ENCODE measurements at regions of chr1 and their contacts with region 1.

Region 1: GRCh38 chr1:23777979-23778814 is at the start of gene PITHD1:
- DNase-seq: peak; percentile 54 to 95 (median 72)

Region 2: DNA sequence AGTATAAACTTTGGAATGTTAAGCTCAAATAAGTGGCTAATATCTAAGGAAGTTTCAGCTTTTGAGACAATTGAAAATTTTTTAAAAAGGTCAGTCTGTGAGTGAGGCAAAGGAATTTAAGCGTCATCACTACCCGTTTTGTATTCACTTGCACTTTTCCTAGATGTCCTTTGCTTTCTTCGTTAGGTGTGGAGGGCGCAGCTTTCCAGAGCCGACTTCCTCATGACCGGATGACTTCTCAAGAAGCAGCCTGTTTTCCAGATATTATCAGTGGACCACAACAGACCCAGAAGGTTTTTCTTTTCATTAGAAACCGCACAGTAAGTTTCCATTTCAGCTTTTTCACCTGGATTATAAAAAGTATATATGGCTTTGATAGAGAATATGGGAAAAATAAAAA is 728.0 kb before region 1 on chr1:
- intact Hi-C with region 1: no loop called
- DNase-seq: no peak

Region 3: DNA sequence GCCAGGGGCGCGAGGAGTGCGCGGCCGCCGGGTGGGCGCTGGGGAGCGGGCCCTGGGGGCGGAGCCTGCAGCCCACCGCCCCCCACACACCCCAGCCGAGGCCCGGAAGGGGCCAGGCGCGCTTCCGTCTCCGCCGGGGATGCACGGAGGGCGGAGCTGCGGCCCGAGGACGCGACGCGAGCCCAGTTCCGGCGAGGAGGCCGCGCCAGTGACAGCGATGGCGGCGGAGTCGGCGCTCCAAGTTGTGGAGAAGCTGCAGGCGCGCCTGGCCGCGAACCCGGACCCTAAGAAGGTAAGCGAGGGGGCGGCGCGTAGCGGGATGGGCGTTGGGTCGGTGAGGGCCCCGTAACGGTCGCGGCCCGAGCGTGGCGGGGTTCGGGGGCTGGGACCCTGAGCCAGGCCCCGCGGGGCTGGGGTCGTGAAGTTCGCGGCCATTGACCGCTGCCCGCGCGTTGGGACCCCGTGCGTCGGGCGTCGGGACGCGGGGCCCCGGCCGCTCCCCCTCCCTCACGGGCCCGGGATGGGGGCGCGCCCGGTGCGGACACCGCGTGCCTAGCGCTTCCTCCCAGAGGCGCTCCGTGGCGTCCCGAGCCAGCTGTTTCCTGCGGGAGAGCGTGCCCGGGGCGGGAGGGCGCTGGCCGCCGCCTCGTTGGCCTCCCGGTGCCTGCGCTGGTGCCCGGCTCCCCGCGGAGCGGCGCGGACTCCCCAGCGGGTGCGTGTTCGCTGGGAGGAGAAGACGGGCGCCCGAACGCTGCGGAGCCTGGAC is 34.7 kb before region 1 on chr1 and contains the start of gene ELOA:
- intact Hi-C with region 1: loop called (anchors 5 kb)
- DNase-seq: peak; percentile 58 to 97 (median 76)

Region 4: DNA sequence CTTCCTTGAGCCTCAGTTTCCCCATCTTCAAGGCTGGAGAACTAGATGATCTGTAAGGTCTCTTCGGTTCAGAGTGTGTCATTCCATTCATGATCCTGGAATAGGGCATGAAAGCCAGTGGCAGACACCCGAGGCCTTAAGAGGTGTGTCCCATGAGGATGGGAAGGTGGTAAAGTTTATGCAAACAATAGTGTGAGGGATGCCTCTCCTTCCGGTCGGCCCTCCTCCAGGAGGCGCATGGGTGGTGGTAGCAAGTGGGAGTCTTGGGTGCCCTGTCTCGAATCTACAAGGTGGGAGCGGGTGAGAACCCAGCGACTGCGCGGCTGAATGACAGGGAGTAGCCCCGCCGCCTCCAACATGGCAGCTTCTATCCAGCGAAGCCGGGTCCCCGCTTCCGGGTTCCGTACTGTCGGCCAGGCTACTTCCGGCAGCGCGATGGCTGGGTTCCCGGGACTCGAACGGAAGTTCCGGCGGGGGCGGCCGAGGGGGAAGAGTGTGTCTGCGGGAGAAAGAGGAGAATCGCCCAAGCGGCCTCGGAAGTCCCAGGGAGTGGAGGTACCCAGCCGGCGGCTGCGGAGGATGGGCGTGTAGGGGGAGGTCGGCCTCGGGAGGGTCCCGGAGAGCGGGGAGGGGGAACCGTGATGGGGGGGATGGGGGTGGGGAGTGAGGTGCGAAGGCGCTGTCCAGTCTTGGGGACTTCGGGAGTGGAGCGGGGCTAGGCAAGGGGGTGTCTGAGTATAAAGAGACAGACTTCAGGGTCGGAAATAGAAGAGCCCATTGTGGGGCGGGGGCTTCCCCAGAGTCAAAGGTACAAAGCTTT is 12.7 kb after region 1 on chr1 and contains the start of gene LYPLA2:
- intact Hi-C with region 1: loop called (anchors 1 kb)
- DNase-seq: peak; percentile 94 to 99 (median 96)

Region 5: DNA sequence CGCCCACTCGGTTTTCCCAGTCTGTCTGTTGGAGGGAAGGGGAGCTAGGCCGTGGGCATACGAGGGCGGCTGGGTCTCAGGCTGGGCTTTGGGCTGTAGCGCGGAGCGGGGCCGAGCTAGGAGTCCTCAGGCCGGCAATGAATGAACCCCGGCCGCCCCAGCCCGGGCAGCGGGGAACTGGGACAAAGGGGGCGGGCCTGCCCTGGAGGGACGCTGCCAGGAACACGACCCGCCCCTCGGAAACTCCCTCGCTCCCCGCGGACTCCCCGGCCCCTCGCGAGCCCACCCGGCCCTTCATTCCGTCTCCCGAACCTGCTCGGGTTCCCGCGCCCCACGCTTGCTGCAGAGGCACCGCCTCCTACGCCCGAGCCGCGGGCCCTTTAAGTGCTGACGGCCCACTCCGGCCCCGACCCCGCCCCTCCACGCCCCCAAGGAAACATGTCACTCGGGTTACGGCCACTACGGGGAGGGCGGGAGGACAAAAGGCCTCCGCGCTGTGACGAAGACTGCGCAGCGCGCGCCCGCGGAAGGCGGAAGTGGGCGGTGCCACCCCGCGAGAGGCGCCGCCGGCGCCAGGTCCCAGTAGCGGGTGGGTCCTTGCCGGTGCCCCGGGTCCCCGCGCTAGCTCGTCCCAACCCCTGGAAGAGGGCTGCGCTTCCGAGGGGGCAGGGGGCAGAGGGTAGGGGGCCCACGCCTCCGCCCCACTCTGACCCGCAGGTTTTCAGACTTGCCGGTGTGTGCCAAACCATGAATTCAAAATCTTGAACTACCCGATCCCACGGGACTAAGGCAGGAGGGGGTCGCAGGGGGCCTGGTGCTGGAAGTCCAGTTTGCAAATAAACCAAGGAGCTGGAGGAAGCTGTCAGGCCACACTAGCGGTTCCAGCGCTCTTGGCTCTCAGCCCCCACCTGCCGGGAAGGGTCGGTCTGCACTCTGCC is 22.5 kb after region 1 on chr1 and contains the start of gene GALE:
- intact Hi-C with region 1: loop called (anchors 2 kb)
- DNase-seq: peak; percentile 93 to 99 (median 95)